ENCODE measurements at regions of chr15 and their contacts with region 1.

Region 1: DNA sequence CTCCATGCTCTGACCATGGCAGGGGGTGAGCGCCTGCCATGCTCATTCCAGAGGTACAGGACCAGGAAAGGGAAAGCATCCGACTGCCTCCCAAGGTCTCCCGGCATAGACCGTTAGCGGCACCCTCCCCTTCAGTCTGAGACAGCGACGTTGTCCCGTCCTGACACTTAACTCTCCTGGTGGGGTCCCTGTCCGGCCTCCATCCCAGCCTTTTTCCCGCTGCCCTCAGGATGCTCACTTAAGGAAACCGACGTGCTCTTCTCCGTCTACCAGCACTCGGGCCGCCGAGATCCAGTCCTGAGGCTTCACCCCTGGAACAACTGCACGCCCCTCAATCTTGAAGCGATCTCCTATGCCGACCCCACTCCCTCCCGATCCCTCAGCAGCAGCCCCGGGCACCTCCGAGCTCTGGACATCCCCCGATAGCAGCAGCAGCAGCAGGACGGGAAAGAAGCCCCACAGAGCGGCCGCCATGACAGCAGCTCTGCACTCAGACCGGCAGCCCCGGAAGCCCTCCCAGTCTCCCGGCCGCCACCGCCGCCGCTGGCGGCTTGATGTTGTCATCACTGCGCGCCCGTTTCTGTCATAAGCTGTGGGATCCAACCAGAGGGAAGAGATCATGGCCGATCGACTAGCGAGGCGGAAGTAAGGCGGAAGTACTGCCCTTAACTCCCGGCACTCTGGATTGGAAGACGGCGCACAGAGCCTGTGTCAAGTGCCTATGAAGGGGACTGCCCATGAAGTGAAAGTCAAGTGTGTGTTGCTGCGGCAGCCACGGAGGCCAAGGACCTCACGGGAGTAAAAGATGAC is at the starts of genes EMC7 and PGBD4:
- DNase-seq: peak; percentile 97
- H3K4me3 ChIP-seq: peak within 1 kb of the TSS; percentile 88
- H3K4me1 ChIP-seq: peaks cover 10% of the 10 kb centered on the region
- H3K27me3 ChIP-seq: no peaks in the 10 kb centered on the region

Region 2: GRCh38 chr15:33587773-33588172 is 513.8 kb before region 1 on chr15:
- in situ Hi-C with region 1: no loop called
- DNase-seq: peak in 1 of 2 experiments; percentile 18
- H3K4me3 ChIP-seq: no peak overlapping the region
- H3K4me1 ChIP-seq: no peaks in the 10 kb centered on the region; the same call in 1 of the 2 replicates
- H3K27me3 ChIP-seq: no peaks in the 10 kb centered on the region

Region 3: GRCh38 chr15:34223904-34224596 is 122.5 kb after region 1 on chr15:
- in situ Hi-C with region 1: loop called (anchors 10 kb)
- DNase-seq: peak in 1 of 2 experiments; percentile 30
- H3K4me3 ChIP-seq: peak overlapping the region; percentile 93
- H3K4me1 ChIP-seq: peaks cover 9% of the 10 kb centered on the region
- H3K27me3 ChIP-seq: no peaks in the 10 kb centered on the region

Region 4: GRCh38 chr15:34367101-34368081 is 265.8 kb after region 1 on chr15 and contains the start of gene LPCAT4:
- in situ Hi-C with region 1: loop called (anchors 10 kb)
- DNase-seq: peak; percentile 83 to 91
- H3K4me3 ChIP-seq: peak within 1 kb of the TSS; percentile 65
- H3K4me1 ChIP-seq: peaks cover 13% of the 10 kb centered on the region
- H3K27me3 ChIP-seq: no peaks in the 10 kb centered on the region

Measured in HAP-1 (cell line).